Ovary (tissue), 10 donors: ENCODE measurements at regions of chr2 and their contacts with region 1.

Region 1: GRCh38 chr2:222318026-222318711 is 19.4 kb upstream of the PAX3 start:
- DNase-seq: peak in 3 of 5 donors; percentile 33 to 61 (median 42)
- H3K4me3 ChIP-seq: peak overlapping the region; percentile 34
- H3K27ac ChIP-seq: no peak overlapping the region
- H3K4me1 ChIP-seq: peaks cover 3% of the 10 kb centered on the region
- H3K27me3 ChIP-seq: no peaks in the 10 kb centered on the region
- CTCF ChIP-seq: peak in 1 of 3 donors; percentile 25
- EP300 ChIP-seq: no peak
- POLR2A ChIP-seq: no peak

Region 2: GRCh38 chr2:222561817-222562645 is 243.9 kb after region 1 on chr2:
- intact Hi-C with region 1: loop called in 2 of 4 experiments (anchors 5 to 10 kb)
- DNase-seq: peak in 2 of 5 donors; percentile 22 to 44
- H3K4me3 ChIP-seq: no peak overlapping the region
- H3K27ac ChIP-seq: no peak overlapping the region
- H3K4me1 ChIP-seq: no peaks in the 10 kb centered on the region
- H3K27me3 ChIP-seq: no peaks in the 10 kb centered on the region
- CTCF ChIP-seq: no peak
- EP300 ChIP-seq: no peak
- POLR2A ChIP-seq: no peak